ENCODE measurements at regions of chr15 and their contacts with region 1.

Region 1: GRCh38 chr15:65054333-65055200 is 9.4 kb downstream of the SLC51B start:
- DNase-seq: peak; percentile 79
- H3K4me3 ChIP-seq: no peak overlapping the region
- H3K27ac ChIP-seq: peak overlapping the region; percentile 36 to 60 (median 40)
- H3K4me1 ChIP-seq: peaks cover 10 to 34% (median 19%) of the 10 kb centered on the region in 4 donors
- H3K27me3 ChIP-seq: no peaks in the 10 kb centered on the region
- CTCF ChIP-seq: peak; percentile 85 to 97 (median 93)
- EP300 ChIP-seq: no peak
- POLR2A ChIP-seq: no peak

Region 2: GRCh38 chr15:64686216-64686631 is 368.3 kb before region 1 on chr15:
- in situ Hi-C with region 1: no loop called
- intact Hi-C with region 1: no loop called
- DNase-seq: no peak
- H3K4me3 ChIP-seq: no peak overlapping the region
- H3K27ac ChIP-seq: peak overlapping the region in 1 of 4 donors; percentile 16
- H3K4me1 ChIP-seq: peaks cover 0 to 16% (median 5%) of the 10 kb centered on the region in 4 donors
- H3K27me3 ChIP-seq: no peaks in the 10 kb centered on the region
- CTCF ChIP-seq: peak; percentile 56 to 83 (median 66)
- EP300 ChIP-seq: no peak
- POLR2A ChIP-seq: no peak

Region 3: GRCh38 chr15:64702816-64703646 is 351.5 kb before region 1 on chr15:
- in situ Hi-C with region 1: no loop called
- intact Hi-C with region 1: no loop called
- DNase-seq: peak; percentile 98
- H3K4me3 ChIP-seq: peak overlapping the region; percentile 70 to 82 (median 79)
- H3K27ac ChIP-seq: peak overlapping the region; percentile 88 to 91 (median 90)
- H3K4me1 ChIP-seq: peaks cover 32 to 50% (median 43%) of the 10 kb centered on the region in 4 donors
- H3K27me3 ChIP-seq: no peaks in the 10 kb centered on the region
- CTCF ChIP-seq: no peak
- EP300 ChIP-seq: peak; percentile 2
- POLR2A ChIP-seq: peak; percentile 76

Region 4: GRCh38 chr15:65077981-65078352 is 23.4 kb after region 1 on chr15:
- in situ Hi-C with region 1: no loop called
- intact Hi-C with region 1: loop called (anchors 1 kb)
- DNase-seq: peak; percentile 89
- H3K4me3 ChIP-seq: no peak overlapping the region
- H3K27ac ChIP-seq: peak overlapping the region in 1 of 4 donors; percentile 27
- H3K4me1 ChIP-seq: peaks cover 8 to 27% (median 22%) of the 10 kb centered on the region in 4 donors
- H3K27me3 ChIP-seq: no peaks in the 10 kb centered on the region
- CTCF ChIP-seq: peak; percentile 56 to 83 (median 70)
- EP300 ChIP-seq: no peak
- POLR2A ChIP-seq: no peak